ENCODE measurements at regions of chr1 and their contacts with region 1.

Region 1: GRCh38 chr1:47710329-47711071 is 272.7 kb downstream of the FOXD2 start:
- DNase-seq: peak; percentile 52 to 85
- H3K4me3 ChIP-seq: no peak overlapping the region
- H3K4me1 ChIP-seq: peaks cover 15% of the 10 kb centered on the region
- H3K27me3 ChIP-seq: peaks cover 8% of the 10 kb centered on the region

Region 2: GRCh38 chr1:46735708-46736324 is 974.7 kb before region 1 on chr1:
- in situ Hi-C with region 1: no loop called
- DNase-seq: peak in 1 of 2 experiments; percentile 67
- H3K4me3 ChIP-seq: no peak overlapping the region
- H3K4me1 ChIP-seq: no peaks in the 10 kb centered on the region
- H3K27me3 ChIP-seq: no peaks in the 10 kb centered on the region

Region 3: GRCh38 chr1:47192458-47193384 is 517.8 kb before region 1 on chr1:
- in situ Hi-C with region 1: loop called (anchors 10 kb)
- DNase-seq: peak; percentile 72 to 87
- H3K4me3 ChIP-seq: no peak overlapping the region
- H3K4me1 ChIP-seq: no peaks in the 10 kb centered on the region
- H3K27me3 ChIP-seq: no peaks in the 10 kb centered on the region

Region 4: DNA sequence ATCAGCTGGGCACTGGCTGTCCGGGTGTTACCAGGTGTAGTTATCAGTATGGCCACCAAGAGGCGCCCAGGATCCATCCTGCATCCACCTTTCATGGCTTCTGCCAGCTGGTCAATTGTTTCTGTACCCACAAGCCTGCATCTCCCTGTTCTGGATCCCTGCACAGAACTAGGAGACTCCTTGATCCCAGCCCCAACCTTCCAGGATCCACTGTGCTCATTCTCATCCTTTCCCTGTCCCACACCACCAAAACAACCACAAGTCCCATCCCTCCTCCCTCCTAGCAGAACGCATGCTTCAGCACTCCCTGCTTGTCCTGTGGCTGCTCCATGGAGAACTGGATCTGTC is 321.6 kb before region 1 on chr1:
- in situ Hi-C with region 1: loop called (anchors 5 kb)
- DNase-seq: peak; percentile 67 to 82
- H3K4me3 ChIP-seq: no peak overlapping the region
- H3K4me1 ChIP-seq: no peaks in the 10 kb centered on the region
- H3K27me3 ChIP-seq: peaks cover 10% of the 10 kb centered on the region; the same call in 1 of the 2 replicates

Region 5: DNA sequence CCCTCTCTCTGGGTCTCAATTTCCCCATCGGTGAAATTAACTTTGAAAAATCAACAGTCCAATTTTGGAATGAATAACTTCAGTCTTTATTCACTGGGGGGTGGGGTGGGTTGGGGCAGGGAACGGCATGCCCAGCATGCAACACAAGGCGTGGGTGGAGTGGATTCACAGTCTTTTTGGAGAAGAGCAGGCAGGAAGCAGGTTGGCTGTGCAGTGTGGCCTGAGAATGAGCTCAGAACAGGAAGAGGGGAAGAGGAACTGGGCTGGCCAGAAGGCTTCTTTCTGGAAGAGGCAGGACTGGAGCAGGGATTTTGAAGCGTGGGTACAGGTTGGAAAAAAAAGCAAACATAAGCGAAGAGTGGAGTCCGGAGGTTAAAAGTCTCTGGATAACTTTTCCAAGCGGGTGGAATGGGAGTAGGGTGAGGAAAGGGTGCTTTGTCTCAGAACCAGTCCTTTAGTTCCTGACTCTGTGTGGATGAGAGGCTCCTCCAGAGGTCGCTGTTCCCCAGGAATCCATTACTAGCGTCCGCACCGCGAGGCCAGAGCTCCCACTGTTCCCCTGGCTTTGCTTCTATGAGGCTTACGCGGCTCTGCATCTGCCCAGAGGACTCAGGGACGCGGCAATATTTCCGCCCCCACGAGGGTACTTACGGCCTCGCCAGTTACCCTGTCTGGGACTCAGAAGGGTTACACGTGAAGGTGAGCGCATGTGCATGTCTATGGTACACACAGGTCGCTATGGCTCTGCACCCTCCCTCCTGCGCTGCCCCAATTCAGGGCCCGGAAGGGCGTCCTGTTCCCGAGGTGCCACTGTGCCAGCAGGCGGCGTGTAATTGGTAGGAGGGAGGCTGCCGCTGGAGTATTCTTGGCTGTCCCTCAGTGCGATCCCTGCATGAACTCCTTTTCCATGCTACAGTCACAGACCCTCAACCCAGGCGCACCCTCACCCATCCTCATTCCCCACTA is 278.1 kb before region 1 on chr1:
- in situ Hi-C with region 1: loop called (anchors 5 kb)
- DNase-seq: peak; percentile 33 to 70
- H3K4me3 ChIP-seq: no peak overlapping the region
- H3K4me1 ChIP-seq: peaks cover 5% of the 10 kb centered on the region
- H3K27me3 ChIP-seq: no peaks in the 10 kb centered on the region

Region 6: DNA sequence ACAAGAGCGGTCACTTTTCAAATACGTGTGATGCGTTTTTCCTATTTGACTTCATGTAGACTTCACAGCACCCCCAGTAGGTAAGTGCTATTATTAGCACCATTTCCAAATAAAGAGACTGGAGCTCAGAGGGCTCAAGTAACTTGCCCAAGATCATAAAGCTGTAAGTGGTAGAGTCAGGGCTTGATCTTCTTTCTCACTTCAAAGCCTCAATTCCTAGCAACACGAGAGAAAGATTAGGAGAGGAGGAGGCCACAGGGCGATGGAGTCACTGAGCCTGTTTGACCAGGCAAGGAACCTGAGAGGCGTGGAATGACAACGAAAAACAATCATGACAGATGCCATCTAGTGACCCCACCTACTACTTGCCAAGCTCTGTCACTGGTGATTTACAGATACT is 91.7 kb before region 1 on chr1:
- in situ Hi-C with region 1: no loop called
- DNase-seq: no peak
- H3K4me3 ChIP-seq: no peak overlapping the region
- H3K4me1 ChIP-seq: no peaks in the 10 kb centered on the region
- H3K27me3 ChIP-seq: 0 out of 2 replicates have a peak, but pooled peaks cover 6% of the 10 kb centered on the region